ENCODE measurements at regions of chr6 and their contacts with region 1.

Region 1: DNA sequence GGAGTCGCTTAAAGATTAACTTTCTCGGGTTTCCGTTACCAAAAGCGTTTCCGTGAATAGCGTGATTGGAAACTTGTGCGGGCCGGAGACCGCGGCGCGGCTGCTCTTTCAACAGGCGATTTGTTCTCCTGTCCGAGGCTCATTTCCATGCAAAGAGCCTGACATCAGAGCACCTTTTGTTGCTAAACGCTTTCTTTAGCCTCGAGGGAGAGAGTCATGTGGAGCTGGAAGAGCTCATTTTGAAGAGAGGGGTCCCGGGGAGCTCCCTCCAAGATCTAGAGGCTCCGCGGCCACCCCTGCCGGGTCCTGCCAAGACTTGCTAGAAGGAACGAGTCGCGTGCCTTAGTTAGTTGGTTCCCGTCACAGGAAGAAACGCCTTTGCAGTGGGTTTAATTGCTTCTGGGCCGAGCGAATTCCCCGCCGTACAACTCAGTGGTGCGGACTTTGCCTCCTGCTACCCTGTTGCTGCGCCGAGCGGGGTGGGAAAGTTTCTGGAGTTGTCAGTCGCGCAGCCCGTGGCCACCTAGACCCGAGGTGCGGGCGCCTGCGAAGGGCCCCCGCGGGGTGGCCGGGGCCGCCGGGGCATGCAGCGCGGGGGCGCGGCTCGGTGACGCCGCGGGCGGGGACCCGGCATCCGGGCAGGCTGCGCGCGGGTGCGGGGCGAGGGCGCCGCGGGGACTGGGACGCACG is at the start of gene SASH1:
- DNase-seq: peak; percentile 70 to 71
- ATAC-seq: peak; percentile 71 to 91 (median 84)
- H3K4me3 ChIP-seq: peak within 1 kb of the TSS; percentile 68 to 88 (median 76)
- H3K27ac ChIP-seq: peak within 1 kb of the TSS; percentile 86 to 98 (median 92)
- H3K4me1 ChIP-seq: peaks cover 0 to 57% (median 38%) of the 10 kb centered on the region in 9 donors
- H3K27me3 ChIP-seq: peaks cover 0 to 31% (median 0%) of the 10 kb centered on the region in 7 donors
- CTCF ChIP-seq: no peak
- total RNA-seq, gene SASH1: 19.0 to 47.1 (median 27.1) TPM

Region 2: DNA sequence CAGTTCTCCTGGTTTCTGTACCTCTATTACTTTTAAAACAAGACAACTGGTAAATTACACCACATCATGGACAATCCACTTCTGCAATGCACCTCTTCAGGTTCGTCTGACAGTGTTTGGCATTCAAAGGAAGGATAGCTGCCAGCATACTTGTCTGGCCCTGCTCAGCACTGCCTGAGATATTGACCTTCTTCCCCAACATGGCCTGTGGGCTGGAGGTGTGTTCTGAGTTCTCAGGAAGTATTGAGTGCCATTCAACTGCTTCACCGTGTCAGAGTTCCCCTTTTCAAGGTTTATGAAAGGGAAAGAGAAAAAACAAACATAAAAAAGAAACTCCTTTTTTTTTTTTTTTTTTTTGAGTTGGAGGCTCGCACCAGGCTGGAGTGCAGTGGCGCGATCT is 267.8 kb before region 1 on chr6:
- intact Hi-C with region 1: no loop called
- DNase-seq: no peak
- ATAC-seq: no peak
- H3K4me3 ChIP-seq: no peak overlapping the region
- H3K27ac ChIP-seq: no peak overlapping the region
- H3K4me1 ChIP-seq: no peaks in the 10 kb centered on the region
- H3K27me3 ChIP-seq: peaks cover 0 to 9% (median 0%) of the 10 kb centered on the region in 7 donors
- CTCF ChIP-seq: no peak

Region 3: DNA sequence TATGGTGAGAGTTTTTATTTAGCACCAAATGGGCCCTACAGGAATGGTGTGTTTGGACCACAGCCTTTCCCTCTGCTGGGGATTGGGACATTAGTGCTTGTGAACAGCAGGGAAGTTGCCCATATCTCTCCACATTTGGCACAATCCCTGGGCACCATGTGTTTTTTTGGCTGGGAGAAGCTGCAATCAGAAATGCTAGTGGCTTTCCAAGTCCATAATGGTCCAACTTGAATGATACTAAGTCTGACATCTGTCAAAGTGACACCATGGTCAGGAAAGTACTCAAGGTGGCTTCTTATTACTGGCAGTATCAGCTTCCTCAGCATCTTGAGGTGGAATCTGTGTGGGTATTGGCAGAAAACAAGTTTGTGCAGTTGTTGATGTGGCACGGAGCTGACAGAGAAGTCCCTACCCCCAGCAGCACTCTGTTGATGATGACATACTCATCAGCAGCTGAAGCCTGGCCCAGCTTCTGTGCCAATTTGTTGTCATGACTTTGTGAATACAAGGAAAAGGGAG is 53.1 kb after region 1 on chr6:
- intact Hi-C with region 1: loop called in 4 of 10 experiments (anchors 10 kb)
- DNase-seq: peak in 1 of 2 donors; percentile 48
- ATAC-seq: peak; percentile 50 to 87 (median 72)
- H3K4me3 ChIP-seq: no peak overlapping the region
- H3K27ac ChIP-seq: peak overlapping the region in 8 of 10 donors; percentile 21 to 85 (median 56)
- H3K4me1 ChIP-seq: peaks cover 4 to 80% (median 58%) of the 10 kb centered on the region in 9 donors
- H3K27me3 ChIP-seq: no peaks in the 10 kb centered on the region
- CTCF ChIP-seq: no peak

Region 4: DNA sequence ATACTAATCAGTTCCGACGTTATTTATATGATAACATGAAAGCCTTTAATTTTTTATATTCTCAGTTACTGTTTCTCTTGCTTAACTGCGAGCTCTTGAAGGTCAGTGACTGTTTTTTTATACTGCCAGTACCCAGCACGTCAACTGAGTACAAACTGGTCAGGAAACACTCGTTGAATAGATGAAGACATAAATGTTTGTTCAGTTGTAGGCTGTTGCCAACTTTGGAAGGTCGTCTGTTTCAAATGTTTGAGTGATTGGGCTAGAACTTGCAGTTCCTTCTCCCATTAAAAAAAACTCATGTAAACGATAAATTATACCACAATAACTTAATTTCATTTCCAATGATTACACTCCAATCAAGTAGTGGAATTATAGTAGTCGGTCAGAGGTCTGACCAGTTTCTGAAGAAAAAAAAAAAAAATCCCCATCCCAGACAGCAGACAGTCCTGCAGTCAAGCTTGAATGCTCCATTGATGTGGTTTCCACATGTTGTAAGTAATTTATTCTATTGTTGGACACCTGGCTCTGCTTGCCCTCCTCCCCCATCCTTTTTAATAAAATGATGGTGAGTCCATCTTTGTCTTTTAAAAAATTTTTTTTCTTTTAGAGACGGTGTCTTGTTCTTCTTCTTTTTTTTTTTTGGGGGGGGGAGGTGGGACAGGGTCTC is 81.2 kb after region 1 on chr6:
- intact Hi-C with region 1: no loop called
- DNase-seq: no peak
- ATAC-seq: peak; percentile 32 to 83 (median 56)
- H3K4me3 ChIP-seq: no peak overlapping the region
- H3K27ac ChIP-seq: peak overlapping the region in 3 of 10 donors; percentile 19 to 39 (median 37)
- H3K4me1 ChIP-seq: peaks cover 4 to 65% (median 23%) of the 10 kb centered on the region in 9 donors
- H3K27me3 ChIP-seq: no peaks in the 10 kb centered on the region
- CTCF ChIP-seq: no peak

Region 5: DNA sequence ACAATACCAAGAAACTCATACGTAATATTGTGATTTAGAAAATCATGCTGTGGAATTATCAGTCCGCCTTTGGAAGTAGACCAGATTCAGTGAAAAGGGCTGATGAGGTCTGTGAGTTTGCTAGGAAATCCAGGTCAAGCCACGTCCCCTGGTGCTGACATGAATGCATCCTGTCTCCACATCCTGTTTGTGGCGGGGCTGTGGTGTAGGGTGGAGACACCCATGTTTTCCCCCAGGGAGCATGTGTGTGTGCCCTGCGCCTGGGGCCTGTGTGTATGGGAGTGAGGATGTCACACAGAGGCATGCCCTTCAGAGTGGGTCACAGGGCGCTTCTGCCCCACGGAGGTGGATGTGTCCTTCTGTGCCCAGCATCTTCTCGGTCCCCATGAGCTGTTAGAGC is 109.2 kb after region 1 on chr6:
- intact Hi-C with region 1: loop called in 2 of 10 experiments (anchors 10 kb)
- DNase-seq: peak; percentile 39 to 42
- ATAC-seq: peak in 6 of 8 donors; percentile 32 to 65 (median 45)
- H3K4me3 ChIP-seq: no peak overlapping the region
- H3K27ac ChIP-seq: peak overlapping the region in 6 of 10 donors; percentile 33 to 81 (median 50)
- H3K4me1 ChIP-seq: peaks cover 0 to 84% (median 41%) of the 10 kb centered on the region in 9 donors
- H3K27me3 ChIP-seq: no peaks in the 10 kb centered on the region
- CTCF ChIP-seq: no peak